GM10248 (cell line): ENCODE measurements at regions of chr3 and their contacts with region 1.

Region 1: GRCh38 chr3:186540221-186540834 is 3.9 kb downstream of the CRYGS start:
- DNase-seq: peak; percentile 52
- CTCF ChIP-seq: peak; percentile 70

Region 2: GRCh38 chr3:185519021-185519420 is 1021.3 kb before region 1 on chr3:
- CTCF ChIA-PET with region 1: no interaction called
- POLR2A ChIA-PET with region 1: no interaction called
- DNase-seq: no peak
- CTCF ChIP-seq: no peak

Region 3: DNA sequence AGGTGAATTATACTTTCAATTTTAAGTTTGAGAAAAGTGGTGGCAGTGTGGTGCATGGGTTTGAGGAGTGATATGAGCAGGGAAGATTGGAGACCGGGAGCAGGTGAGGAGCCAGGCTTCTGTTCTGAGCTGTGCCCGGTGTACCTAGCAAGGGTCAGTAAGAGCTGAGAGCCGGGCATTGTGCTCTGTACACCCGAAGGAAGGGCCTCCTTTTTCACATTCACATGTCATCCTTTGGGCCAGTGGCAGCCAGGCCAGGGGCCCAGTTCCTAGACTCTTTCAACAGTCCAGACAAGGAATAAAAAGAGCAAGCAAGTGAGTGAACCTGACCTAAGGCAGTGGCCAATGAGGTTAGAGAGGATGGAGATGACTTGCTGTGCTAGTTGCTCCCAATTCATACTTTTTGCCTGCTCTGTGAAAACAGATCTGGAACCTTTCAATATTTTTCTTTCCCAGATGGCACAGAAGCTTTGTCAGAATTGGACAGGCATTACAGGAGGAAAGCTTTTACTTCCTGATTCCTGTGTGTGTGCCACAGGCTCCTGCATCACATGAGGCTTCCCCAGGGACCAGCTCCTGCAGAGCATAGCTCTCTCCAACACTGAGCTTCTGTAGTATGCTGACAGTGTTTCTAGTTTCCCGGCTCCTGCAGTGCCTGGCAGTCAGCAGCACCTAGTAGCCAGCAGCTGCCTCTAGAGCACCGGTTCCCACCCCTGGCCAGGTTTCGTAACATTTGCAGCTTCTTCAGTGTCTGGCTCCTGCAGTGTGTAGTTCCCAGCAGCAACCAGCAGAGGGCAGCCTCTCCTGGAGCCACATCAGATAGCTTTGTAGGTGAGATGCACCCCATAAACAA is 597.2 kb before region 1 on chr3:
- CTCF ChIA-PET with region 1: interaction called, 53 read pairs
- POLR2A ChIA-PET with region 1: no interaction called
- DNase-seq: peak; percentile 84
- CTCF ChIP-seq: peak; percentile 99

Region 4: GRCh38 chr3:186241910-186242821 is 298.2 kb before region 1 on chr3:
- CTCF ChIA-PET with region 1: interaction called, 62 read pairs
- POLR2A ChIA-PET with region 1: no interaction called
- DNase-seq: peak; percentile 77
- CTCF ChIP-seq: peak; percentile 76

Region 5: GRCh38 chr3:186303985-186304384 is 236.3 kb before region 1 on chr3:
- CTCF ChIA-PET with region 1: no interaction called
- POLR2A ChIA-PET with region 1: no interaction called
- DNase-seq: no peak
- CTCF ChIP-seq: no peak

Region 6: GRCh38 chr3:186352369-186352768 is 188.0 kb before region 1 on chr3:
- CTCF ChIA-PET with region 1: interaction called, 12 read pairs
- POLR2A ChIA-PET with region 1: no interaction called
- DNase-seq: no peak
- CTCF ChIP-seq: no peak

Region 7: DNA sequence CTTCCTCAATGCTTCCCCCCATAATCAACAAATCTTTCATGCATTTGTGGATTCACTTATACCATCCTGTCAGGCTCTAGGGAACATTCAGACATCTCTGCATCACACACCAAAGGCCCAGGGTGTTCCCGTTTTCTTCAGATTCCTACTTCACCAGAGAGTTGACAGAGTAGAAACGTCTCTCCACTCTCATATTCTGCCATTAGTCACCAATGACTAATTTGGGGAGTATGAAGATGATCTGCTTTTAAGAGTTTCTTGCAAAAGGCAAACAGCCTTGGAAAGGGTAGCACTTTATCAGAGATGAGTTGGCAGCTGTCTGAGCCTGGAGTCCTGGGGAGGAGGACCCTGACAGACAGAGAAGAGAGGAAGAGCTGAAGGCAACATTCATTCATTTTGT is 122.5 kb before region 1 on chr3:
- CTCF ChIA-PET with region 1: no interaction called
- POLR2A ChIA-PET with region 1: no interaction called
- DNase-seq: no peak
- CTCF ChIP-seq: no peak

Region 8: DNA sequence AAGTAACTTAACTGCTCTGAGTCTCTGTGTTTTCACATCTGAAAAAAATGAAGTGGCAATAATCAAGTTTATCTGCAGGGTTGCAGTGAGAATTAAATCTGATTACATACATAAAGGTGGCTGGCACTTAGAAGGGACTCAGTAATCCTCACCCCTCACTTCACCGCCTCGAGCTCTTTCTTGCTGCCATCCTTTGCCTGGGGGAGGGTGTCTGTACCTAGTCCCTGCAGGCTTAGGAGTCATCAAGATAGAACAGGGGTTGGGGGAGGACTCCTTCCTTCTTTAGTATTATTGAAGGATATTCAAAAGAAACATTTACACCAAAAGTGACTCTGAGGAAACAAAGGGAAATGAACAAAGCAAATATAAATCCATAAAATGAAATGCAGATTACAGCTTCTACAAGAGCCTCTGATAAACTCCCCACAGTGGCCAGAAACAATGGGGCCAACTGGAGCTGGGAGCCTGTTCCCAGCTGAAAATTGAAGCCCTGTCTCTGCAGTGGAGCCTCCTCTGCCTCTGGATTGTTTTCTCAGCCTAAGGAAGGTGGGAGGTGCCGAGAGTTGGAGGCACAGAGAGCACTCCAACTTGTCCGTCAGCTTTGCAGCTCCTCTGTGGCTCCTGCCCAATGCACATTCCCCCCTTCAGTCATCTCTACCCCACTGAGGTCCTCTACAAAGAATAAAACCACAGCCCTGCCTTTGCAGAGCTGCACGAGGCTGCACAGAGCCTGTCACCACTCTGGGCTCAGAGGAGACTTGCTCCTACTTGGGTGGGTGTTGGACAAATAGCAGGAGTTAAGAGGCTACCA is 38.0 kb before region 1 on chr3:
- CTCF ChIA-PET with region 1: interaction called, 29 read pairs
- POLR2A ChIA-PET with region 1: no interaction called
- DNase-seq: no peak
- CTCF ChIP-seq: no peak

Region 9: DNA sequence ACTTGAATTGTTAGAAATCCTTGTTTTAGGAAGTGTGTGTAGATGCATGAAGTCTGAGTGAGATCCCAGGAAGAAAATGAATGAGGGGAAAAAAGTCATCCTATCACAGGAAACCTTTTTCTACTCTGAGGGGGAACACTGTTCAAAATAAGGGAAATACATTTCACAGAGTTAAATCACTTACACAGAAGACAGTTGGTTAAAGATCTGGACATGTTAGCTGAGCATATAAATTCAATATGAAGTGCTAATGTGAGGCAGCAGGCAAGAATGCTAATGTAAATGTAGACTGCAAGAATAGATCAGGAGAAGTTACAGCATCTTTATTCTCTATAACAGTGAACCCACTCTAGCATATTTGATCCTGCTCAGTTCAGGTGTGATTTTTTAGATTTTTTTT is 24.3 kb after region 1 on chr3:
- CTCF ChIA-PET with region 1: interaction called, 22 read pairs
- POLR2A ChIA-PET with region 1: no interaction called
- DNase-seq: no peak
- CTCF ChIP-seq: no peak